ENCODE measurements at regions of chr17 and their contacts with region 1.

Region 1: DNA sequence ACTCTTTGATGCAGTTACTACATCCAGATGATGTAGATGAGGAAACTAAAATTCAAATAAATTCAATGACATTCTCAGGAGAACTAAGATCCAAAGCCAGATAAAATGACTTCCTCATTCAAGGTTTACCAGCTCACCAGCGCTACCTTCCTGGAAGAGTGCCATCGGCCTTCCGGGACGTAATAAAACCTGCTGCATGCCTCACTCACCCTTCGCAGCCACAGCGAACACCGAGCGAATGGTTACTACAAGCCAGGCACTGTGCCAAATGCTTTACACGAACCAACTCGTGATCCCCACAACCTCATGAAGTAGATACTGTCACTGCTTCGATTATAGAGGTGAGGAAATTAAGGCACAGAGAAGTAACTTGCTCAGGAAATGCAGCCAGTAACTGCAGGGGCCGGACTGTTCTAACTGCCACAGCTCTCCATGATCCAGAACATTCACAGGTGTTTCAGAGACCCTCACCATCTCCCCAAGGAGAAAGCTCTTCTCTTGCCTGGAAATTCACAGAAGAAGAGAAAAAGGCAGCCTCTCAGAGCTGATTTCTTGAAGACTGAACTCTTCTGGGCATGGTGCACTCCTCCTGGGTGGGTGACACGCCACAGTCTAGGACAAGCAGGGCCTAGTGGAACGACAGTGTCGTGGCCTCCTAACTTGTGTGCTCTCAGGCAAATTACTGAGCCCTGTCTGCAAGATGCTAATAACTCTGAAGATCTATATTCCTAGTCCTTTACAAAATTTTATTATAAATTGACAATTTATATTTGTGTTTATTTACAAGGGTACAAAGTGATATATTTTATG is 46.8 kb downstream of the HIC1 start:
- DNase-seq: peak in 1 of 5 donors; percentile 27
- H3K4me3 ChIP-seq: no peak overlapping the region
- H3K27ac ChIP-seq: no peak overlapping the region
- H3K4me1 ChIP-seq: no peaks in the 10 kb centered on the region
- H3K27me3 ChIP-seq: no peaks in the 10 kb centered on the region
- CTCF ChIP-seq: no peak
- EP300 ChIP-seq: no peak
- POLR2A ChIP-seq: no peak

Region 2: DNA sequence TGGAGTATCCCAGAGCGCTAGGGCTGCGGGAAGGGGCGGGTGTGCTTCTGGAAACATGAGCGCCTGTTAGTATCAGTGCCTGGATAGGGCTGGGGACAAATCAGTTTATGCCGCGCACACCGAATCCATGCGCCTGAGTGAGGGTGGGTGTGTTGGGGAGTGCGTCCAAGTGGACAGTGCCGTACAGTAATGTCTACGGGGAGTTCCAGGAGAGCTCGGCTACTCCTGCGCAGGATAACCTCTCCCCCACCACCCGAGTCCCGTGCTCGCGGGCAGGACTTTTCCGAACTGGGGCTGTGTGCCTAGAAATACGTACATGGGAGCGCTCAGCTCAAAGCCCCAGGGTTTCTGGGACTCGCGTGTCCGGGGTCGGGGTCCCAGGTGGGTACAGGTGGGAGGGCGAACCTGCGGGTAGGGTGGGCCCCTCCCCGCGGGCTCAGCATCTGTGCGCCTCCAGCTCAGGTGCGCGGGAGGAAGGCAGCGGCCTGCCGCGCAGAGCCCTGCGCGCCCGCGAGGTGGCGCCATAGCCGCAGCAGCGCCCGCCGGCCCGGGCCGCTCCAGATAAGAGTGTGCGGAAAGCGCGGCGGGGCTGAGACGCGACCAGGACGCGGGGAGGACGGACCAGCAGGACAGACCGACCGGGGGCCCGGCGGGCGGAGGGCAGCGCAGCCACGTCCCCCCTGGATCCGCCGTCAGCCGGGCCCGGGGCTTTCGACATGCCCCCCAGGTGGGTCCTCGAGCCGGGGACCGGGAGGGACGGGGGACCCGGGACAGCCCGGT is 47.0 kb before region 1 on chr17 and contains the start of gene HIC1:
- intact Hi-C with region 1: no loop called
- DNase-seq: peak; percentile 81 to 90 (median 87)
- H3K4me3 ChIP-seq: peak within 1 kb of the TSS; percentile 41
- H3K27ac ChIP-seq: peak within 1 kb of the TSS; percentile 89 to 98
- H3K4me1 ChIP-seq: peaks cover 8% of the 10 kb centered on the region
- H3K27me3 ChIP-seq: no peaks in the 10 kb centered on the region
- CTCF ChIP-seq: peak; percentile 98 to 99 (median 99)
- EP300 ChIP-seq: no peak
- POLR2A ChIP-seq: peak; percentile 84
- total RNA-seq, gene HIC1: 35.0 to 108 (median 68.0) TPM

Region 3: DNA sequence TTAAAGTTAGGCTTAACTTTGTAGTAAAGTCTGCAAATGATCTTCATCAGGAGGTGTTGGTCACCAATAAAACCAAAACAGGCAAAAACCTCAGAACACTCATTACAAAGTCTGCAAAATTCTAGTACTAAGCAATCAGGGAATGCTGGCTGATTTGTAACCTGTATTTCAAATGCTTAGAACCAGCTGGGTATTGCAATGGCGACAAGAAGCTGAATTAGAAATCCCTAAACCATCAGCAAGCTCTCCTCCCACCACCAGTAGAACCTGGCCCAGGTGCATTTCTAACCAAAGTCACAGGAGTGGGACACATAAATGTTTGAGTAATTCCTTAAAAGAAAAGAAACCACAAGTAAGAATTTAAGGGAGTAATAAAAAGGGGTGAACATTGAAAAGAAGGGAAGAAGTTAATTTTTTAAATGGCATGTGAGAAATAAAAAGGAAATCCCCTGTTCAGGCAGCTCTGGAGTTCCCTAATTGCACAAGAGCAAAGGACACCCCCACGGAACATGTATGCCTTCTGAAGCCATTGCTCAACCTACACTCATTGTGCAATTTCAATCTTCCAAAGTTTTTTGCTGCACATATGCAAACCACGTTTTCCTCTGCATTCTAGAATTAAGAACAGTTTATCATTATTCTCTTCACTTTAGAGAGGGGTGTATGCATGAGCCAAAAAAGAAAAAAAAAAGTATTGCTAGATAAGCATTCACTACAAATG is 56.2 kb after region 1 on chr17:
- intact Hi-C with region 1: loop called in 1 of 4 experiments (anchors 10 kb)
- DNase-seq: no peak
- H3K4me3 ChIP-seq: no peak overlapping the region
- H3K27ac ChIP-seq: no peak overlapping the region
- H3K4me1 ChIP-seq: peaks cover 2% of the 10 kb centered on the region
- H3K27me3 ChIP-seq: no peaks in the 10 kb centered on the region
- CTCF ChIP-seq: no peak
- EP300 ChIP-seq: no peak
- POLR2A ChIP-seq: no peak